ENCODE measurements at regions of chr10 and their contacts with region 1.

Region 1: DNA sequence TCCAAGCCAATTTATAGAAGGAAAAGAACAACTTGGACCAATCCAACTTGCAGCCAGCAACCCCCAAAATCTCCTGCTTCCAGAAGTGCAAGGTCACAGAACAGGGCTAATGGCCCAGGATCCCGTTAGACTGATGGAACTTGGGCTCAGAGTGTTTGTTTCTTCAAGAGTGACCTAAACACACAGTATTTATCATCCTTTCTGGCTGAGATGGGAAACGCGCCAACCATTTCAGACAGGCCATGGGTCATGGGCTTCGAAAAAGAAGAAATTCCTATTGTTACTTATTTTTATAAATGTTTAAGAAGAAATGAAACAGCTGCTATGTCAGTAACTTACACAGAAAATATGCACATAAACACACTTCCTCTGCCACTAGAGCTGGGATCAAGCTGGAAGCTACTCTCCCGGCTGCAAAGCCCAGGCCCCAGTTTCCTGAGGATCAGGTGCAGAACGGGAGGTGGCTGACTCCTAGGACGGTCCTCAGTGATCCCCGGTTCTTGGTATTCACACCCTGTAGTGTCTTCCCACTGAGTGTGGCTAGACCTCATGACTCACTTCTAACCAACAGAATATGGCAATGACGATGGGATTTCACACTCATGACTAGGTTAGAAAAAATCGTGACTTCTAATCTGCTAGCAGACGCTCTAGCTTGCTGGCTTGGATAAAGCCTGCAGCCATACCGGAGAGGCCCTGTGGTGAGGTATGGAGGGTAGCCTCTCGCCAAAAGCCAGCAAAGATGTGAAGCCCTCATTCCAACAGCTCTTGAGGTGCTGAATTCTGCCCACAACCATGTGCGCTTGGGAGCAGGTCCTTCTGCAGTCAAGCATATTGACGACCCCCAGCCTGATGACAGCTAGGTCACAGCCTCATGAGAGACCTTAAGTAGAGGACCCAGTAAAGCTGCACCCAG is 60.2 kb downstream of the CHST15 start:
- DNase-seq: peak; percentile 59 to 74 (median 63)
- H3K4me3 ChIP-seq: no peak overlapping the region
- H3K27ac ChIP-seq: peak overlapping the region; percentile 23 to 69
- H3K4me1 ChIP-seq: peaks cover 28% of the 10 kb centered on the region
- H3K27me3 ChIP-seq: no peaks in the 10 kb centered on the region
- CTCF ChIP-seq: no peak
- EP300 ChIP-seq: no peak
- POLR2A ChIP-seq: no peak

Region 2: GRCh38 chr10:124083740-124084397 is 50.6 kb after region 1 on chr10:
- intact Hi-C with region 1: loop called in 1 of 4 experiments (anchors 2 kb)
- DNase-seq: no peak
- H3K4me3 ChIP-seq: no peak overlapping the region
- H3K27ac ChIP-seq: no peak overlapping the region
- H3K4me1 ChIP-seq: peaks cover 43% of the 10 kb centered on the region
- H3K27me3 ChIP-seq: no peaks in the 10 kb centered on the region
- CTCF ChIP-seq: no peak
- EP300 ChIP-seq: no peak
- POLR2A ChIP-seq: no peak

Measured in ovary (tissue), 10 donors.